CD14-positive monocyte (primary cell): ENCODE measurements at regions of chr6 and their contacts with region 1.

Region 1: GRCh38 chr6:96897383-96898240 is at the start of gene NDUFAF4:
- DNase-seq: peak; percentile 87 to 91 (median 91)
- H3K4me3 ChIP-seq: peak within 1 kb of the TSS; percentile 79 to 91 (median 87)
- H3K4me3 Mint-ChIP-seq: peak within 1 kb of the TSS; percentile 93 to 97
- H3K27ac ChIP-seq: peak within 1 kb of the TSS; percentile 72 to 85
- H3K27ac Mint-ChIP-seq: peak within 1 kb of the TSS; percentile 78 to 94 (median 81)
- H3K4me1 ChIP-seq: peaks cover 26 to 31% of the 10 kb centered on the region in 2 donors
- H3K4me1 Mint-ChIP-seq: peaks cover 37% of the 10 kb centered on the region
- H3K27me3 ChIP-seq: no peaks in the 10 kb centered on the region
- H3K27me3 Mint-ChIP-seq: peaks cover 0 to 2% (median 0%) of the 10 kb centered on the region in 3 donors
- CTCF ChIP-seq: peak; percentile 98
- polyA plus RNA-seq, gene NDUFAF4: 7.6 to 17.5 (median 14.9) TPM

Region 2: GRCh38 chr6:96521644-96522464 is 375.8 kb before region 1 on chr6 and contains the start of gene UFL1:
- intact Hi-C with region 1: loop called in 1 of 2 experiments (anchors 5 kb)
- DNase-seq: peak; percentile 88 to 94 (median 89)
- H3K4me3 ChIP-seq: peak within 1 kb of the TSS; percentile 51 to 92 (median 82)
- H3K4me3 Mint-ChIP-seq: peak within 1 kb of the TSS; percentile 97 to 98
- H3K27ac ChIP-seq: peak within 1 kb of the TSS; percentile 97 to 98
- H3K27ac Mint-ChIP-seq: peak within 1 kb of the TSS; percentile 99 to 100 (median 100)
- H3K4me1 ChIP-seq: peaks cover 15 to 16% of the 10 kb centered on the region in 2 donors
- H3K4me1 Mint-ChIP-seq: peaks cover 17% of the 10 kb centered on the region
- H3K27me3 ChIP-seq: no peaks in the 10 kb centered on the region
- H3K27me3 Mint-ChIP-seq: no peaks in the 10 kb centered on the region
- CTCF ChIP-seq: no peak
- polyA plus RNA-seq, gene UFL1: 5.4 to 16.3 (median 12.6) TPM

Region 3: GRCh38 chr6:97282726-97283617 is 385.4 kb after region 1 on chr6 and contains the start of gene MMS22L:
- intact Hi-C with region 1: loop called (anchors 10 kb)
- DNase-seq: peak; percentile 91 to 92 (median 92)
- H3K4me3 ChIP-seq: peak within 1 kb of the TSS; percentile 72 to 93 (median 91)
- H3K4me3 Mint-ChIP-seq: peak within 1 kb of the TSS; percentile 91 to 97
- H3K27ac ChIP-seq: peak within 1 kb of the TSS; percentile 45 to 74
- H3K27ac Mint-ChIP-seq: peak within 1 kb of the TSS; percentile 60 to 92 (median 84)
- H3K4me1 ChIP-seq: peaks cover 9 to 17% of the 10 kb centered on the region in 2 donors
- H3K4me1 Mint-ChIP-seq: peaks cover 20% of the 10 kb centered on the region
- H3K27me3 ChIP-seq: no peaks in the 10 kb centered on the region
- H3K27me3 Mint-ChIP-seq: peaks cover 0 to 1% (median 1%) of the 10 kb centered on the region in 3 donors
- CTCF ChIP-seq: no peak
- polyA plus RNA-seq, gene MMS22L: 1.6 to 3.4 (median 2.1) TPM